ENCODE measurements at regions of chr10 and their contacts with region 1.

Region 1: GRCh38 chr10:44857363-44858016 is 53.6 kb upstream of the TMEM72 start:
- DNase-seq: peak; percentile 76
- H3K4me3 Mint-ChIP-seq: no peak overlapping the region
- H3K27ac Mint-ChIP-seq: no peak overlapping the region
- H3K4me1 Mint-ChIP-seq: no peaks in the 10 kb centered on the region
- H3K27me3 Mint-ChIP-seq: peaks cover 40% of the 10 kb centered on the region
- CTCF ChIP-seq: peak; percentile 98

Region 2: DNA sequence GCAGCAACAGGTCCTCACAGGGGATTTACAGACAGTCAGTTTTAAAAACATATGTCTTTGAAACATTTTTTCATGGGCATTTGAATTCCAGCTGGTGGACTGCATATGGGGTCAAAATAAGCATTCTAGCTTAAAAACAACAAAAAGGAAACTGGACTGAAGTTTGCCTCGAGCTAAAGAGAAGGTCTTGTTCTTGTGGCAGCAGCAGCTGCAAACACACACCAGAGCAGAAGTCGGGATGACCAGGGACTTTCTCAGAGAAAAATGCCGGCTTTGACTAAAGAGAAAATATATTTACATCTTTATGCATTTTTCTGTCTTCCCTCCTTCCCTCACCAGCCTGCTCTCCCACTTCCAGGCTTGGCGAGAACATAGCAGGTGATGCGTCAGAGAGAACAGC is 834.0 kb before region 1 on chr10:
- CTCF ChIA-PET with region 1: interaction called, 12 read pairs
- intact Hi-C with region 1: no loop called
- DNase-seq: no peak
- H3K4me3 Mint-ChIP-seq: no peak overlapping the region
- H3K27ac Mint-ChIP-seq: no peak overlapping the region
- H3K4me1 Mint-ChIP-seq: no peaks in the 10 kb centered on the region
- H3K27me3 Mint-ChIP-seq: peaks cover 19% of the 10 kb centered on the region
- CTCF ChIP-seq: no peak

Region 3: GRCh38 chr10:44386546-44387052 is 470.9 kb before region 1 on chr10:
- CTCF ChIA-PET with region 1: interaction called, 3 read pairs
- intact Hi-C with region 1: loop called (anchors 2 kb)
- DNase-seq: peak; percentile 73
- H3K4me3 Mint-ChIP-seq: no peak overlapping the region
- H3K27ac Mint-ChIP-seq: no peak overlapping the region
- H3K4me1 Mint-ChIP-seq: no peaks in the 10 kb centered on the region
- H3K27me3 Mint-ChIP-seq: peaks cover 48% of the 10 kb centered on the region
- CTCF ChIP-seq: peak; percentile 58

Region 4: DNA sequence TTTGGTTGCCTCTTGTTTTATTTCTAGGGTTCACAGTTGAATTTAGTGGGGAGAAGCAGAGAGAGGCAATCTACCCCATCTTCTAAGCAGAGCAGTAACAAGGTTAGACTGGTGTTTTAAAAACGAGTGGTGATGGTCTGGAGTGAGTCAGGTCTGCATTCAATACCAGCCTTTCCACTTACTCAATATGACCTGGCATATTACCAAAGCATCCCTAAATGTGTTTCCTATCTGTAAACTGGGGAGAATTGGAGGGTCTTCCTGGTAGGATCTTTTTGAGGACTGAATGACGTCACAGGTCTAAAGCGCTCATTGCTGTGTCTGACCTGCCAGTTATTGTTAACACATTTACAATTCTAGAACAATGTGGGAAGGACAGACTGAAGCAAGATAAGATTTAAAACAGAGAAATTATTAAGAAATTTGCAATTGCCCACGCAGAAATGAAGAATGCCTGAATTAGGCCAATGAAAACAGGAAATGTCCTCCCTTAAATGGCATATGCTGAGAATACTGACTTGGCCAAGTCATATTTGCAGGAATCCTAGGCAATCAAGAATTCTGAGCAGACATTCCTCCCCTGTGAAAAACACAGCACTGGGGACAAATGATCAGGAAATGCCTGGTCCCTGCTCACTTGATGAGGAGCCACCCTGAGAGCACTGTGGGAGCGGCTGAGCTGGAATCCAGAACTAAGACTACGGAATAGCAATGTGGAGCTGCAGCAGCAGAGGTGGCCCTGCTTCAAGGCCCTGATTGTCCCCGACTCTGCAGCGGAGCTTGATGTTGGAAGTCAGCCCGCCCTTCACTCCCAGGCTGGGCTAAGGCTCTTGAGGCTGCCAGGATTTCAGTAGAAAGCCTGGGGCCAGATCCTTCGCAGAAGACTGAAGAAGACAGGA is 288.0 kb before region 1 on chr10:
- CTCF ChIA-PET with region 1: no interaction called
- intact Hi-C with region 1: loop called (anchors 5 kb)
- DNase-seq: no peak
- H3K4me3 Mint-ChIP-seq: no peak overlapping the region
- H3K27ac Mint-ChIP-seq: no peak overlapping the region
- H3K4me1 Mint-ChIP-seq: no peaks in the 10 kb centered on the region
- H3K27me3 Mint-ChIP-seq: peaks cover 88% of the 10 kb centered on the region
- CTCF ChIP-seq: no peak

Region 5: DNA sequence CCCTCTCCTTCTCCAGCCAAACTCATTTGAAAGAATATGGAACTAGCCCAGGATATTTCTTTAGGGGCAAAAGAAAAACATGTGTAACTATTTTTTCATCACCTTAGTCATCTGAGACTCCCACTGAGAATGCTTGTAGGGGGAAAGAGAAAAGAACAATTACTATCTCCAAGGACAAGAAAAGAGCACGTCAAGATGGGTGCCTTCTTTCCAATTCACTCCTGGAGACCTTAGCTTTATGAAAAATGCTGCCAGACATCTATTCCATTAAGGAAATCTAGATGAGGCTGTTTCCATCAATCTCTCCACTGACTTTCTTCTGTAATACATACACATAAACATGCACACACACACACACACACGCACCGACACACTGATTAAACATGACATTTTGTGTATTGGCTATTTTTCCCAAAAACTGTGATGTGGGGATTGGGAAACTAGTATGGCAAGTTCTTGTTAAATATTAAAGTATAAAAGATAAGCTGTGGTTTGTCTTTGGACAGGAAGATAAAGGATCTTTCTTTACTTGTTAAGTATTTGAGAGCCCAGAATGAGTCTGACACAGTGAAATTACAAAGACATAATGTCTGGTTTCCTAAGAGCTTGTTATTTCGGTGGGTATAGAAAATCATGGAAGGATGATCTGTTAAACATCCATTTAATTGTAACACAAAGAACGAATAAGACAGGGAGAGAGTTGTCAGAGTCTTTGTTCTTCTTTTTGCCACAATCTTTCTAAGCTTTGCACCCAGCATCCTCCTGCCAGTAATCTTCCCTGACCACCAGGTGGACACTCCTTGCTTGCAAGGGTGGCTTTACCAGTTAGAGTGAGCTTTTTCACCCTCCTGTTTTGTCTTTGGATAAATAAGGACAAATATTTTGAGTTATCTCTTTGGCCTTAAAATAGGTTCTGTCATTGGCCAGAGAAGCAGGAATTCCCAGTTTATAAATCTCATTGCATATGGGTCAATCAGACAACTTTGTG is 123.7 kb before region 1 on chr10:
- CTCF ChIA-PET with region 1: interaction called, 3 read pairs
- intact Hi-C with region 1: loop called (anchors 5 kb)
- DNase-seq: peak; percentile 27
- H3K4me3 Mint-ChIP-seq: no peak overlapping the region
- H3K27ac Mint-ChIP-seq: no peak overlapping the region
- H3K4me1 Mint-ChIP-seq: peaks cover 11% of the 10 kb centered on the region
- H3K27me3 Mint-ChIP-seq: no peaks in the 10 kb centered on the region
- CTCF ChIP-seq: peak; percentile 61

Region 6: DNA sequence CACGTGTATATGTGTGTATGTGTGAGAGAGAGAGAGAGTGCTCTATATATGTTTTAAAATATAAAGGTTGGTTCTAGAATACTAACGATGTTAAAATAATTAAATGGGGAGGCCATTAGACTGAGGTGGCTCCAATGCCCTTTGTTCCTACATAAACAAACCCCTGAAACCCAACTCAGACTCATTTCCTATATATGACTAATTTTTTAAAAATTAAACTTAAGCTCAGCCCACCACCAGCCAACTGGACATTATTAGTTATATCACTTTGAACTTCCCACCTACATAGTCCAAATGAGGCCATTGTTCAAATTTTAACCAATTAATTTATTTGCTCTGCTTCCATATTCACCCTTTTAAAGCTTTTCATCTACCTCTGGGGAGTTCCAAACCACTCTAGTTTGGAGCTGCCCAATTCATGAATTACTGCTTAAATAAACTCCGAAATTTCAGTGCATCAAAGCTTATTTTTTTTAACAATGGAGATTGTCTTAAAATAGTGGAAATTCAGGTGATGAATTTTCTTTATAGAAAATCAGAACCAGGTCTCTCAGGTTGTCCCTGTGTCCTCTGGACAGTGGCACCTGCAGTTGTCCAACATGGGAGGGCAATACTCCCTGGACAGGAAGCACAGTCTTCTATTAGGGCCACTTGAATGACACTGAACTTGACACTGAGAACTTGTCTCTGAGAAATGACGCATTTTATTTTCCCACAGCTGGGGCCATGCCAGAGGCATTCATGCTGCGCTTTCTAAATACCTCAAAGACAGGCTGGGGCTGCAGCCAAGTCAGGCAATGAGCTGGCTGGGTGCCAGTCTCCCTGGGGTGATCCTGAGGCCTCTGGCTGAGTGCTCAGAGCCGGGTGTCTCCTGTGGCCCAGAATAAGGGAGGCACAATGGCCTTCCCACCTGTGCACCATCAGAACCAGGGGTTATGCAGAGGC is 55.8 kb before region 1 on chr10:
- CTCF ChIA-PET with region 1: interaction called, 11 read pairs
- intact Hi-C with region 1: loop called (anchors 5 kb)
- DNase-seq: peak; percentile 96
- H3K4me3 Mint-ChIP-seq: peak overlapping the region; percentile 28
- H3K27ac Mint-ChIP-seq: peak overlapping the region; percentile 69
- H3K4me1 Mint-ChIP-seq: peaks cover 60% of the 10 kb centered on the region
- H3K27me3 Mint-ChIP-seq: peaks cover 6% of the 10 kb centered on the region
- CTCF ChIP-seq: no peak

Measured in Calu3 (cell line).